IMR-90 (cell line): ENCODE measurements at regions of chrX and their contacts with region 1.

Region 1: GRCh38 chrX:103343105-103343504 is 13.1 kb downstream of the TCEAL7 start:
- DNase-seq: peak; percentile 55
- ATAC-seq: peak; percentile 83
- H3K4me3 ChIP-seq: no peak overlapping the region
- H3K27ac ChIP-seq: no peak overlapping the region
- H3K4me1 ChIP-seq: peaks cover 2% of the 10 kb centered on the region; the same call in 1 of the 2 replicates
- H3K27me3 ChIP-seq: peaks cover 15% of the 10 kb centered on the region
- CTCF ChIP-seq: peak; percentile 69
- POLR2A ChIP-seq: no peak
- RAD21 ChIP-seq: peak; percentile 69

Region 2: GRCh38 chrX:103214870-103215424 is 128.2 kb before region 1 on chrX and contains the start of gene BEX4:
- CTCF ChIA-PET with region 1: no interaction called
- POLR2A ChIA-PET with region 1: no interaction called
- dilution Hi-C with region 1: no loop called
- in situ Hi-C with region 1: no loop called
- intact Hi-C with region 1: loop called (anchors 5 kb)
- DNase-seq: peak; percentile 41
- ATAC-seq: peak; percentile 84
- H3K4me3 ChIP-seq: peak within 1 kb of the TSS; percentile 61
- H3K27ac ChIP-seq: no peak within 1 kb of the TSS
- H3K4me1 ChIP-seq: no peaks in the 10 kb centered on the region
- H3K27me3 ChIP-seq: peaks cover 9% of the 10 kb centered on the region
- CTCF ChIP-seq: no peak
- POLR2A ChIP-seq: no peak
- RAD21 ChIP-seq: no peak
- total RNA-seq, gene BEX4: 0.54 and 3.3 TPM in 2 replicates

Region 3: DNA sequence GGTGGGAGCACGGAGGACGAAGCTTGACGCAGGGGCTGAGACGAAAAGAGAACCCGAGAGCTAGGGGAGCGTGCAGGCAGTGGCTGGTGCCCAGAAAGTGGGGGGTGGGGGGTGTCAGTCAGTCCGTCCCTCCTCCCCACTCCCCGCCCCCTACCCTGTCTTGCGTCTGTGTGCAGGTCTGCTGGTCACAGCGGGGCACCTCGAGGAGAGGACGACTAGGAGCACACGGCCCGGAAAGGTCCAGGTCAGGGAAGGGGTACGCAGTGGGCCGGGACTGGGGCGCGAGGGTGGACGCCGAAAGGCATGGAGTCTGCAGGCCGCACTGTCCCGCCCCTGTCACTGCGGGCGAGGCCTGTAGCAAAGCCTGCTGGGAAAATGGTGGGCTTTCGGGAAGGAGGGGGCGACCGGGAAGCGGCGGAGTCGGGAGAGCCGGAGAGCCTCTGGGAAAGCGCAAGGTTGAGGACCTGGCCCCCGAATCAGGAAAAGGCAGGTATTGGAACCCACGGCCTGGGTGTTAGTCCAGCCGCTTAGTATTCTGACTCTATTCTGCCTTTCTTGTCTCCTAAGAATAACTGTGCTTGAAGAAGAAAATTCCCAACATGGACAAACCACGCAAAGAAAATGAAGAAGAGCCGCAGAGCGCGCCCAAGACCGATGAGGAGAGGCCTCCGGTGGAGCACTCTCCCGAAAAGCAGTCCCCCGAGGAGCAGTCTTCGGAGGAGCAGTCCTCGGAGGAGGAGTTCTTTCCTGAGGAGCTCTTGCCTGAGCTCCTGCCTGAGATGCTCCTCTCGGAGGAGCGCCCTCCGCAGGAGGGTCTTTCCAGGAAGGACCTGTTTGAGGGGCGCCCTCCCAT is 286.4 kb after region 1 on chrX:
- CTCF ChIA-PET with region 1: no interaction called
- POLR2A ChIA-PET with region 1: no interaction called
- dilution Hi-C with region 1: no loop called
- in situ Hi-C with region 1: no loop called
- intact Hi-C with region 1: no loop called
- DNase-seq: peak; percentile 67
- ATAC-seq: peak; percentile 87
- H3K4me3 ChIP-seq: peak overlapping the region; percentile 81
- H3K27ac ChIP-seq: peak overlapping the region; percentile 98
- H3K4me1 ChIP-seq: no peaks in the 10 kb centered on the region
- H3K27me3 ChIP-seq: no peaks in the 10 kb centered on the region
- CTCF ChIP-seq: peak; percentile 62
- POLR2A ChIP-seq: no peak
- RAD21 ChIP-seq: peak; percentile 34; the same call in 1 of the 2 replicates